IMR-90 (cell line): ENCODE measurements at regions of chr1 and their contacts with region 1.

Region 1: DNA sequence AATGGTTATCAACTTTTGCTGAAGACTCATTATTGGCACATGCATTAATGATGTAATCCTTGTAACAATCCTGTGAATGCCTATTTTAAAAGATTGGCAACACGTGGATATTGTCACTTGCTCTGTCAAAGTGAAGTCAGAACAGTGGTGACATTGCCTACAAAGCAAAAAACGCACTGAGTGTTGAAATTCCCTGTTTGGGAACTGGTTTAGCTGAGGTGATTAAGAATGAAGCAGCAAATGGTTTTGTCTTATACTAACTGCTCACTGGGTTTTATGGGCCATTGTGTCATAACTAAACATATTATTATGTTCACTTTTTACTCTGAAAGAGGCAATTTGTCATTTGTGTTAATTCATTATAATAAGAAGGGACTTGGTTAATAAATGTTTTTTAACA is 11.3 kb downstream of the OR14A16 start:
- DNase-seq: no peak
- ATAC-seq: no peak
- H3K4me3 ChIP-seq: no peak overlapping the region
- H3K27ac ChIP-seq: no peak overlapping the region
- H3K4me1 ChIP-seq: no peaks in the 10 kb centered on the region
- H3K27me3 ChIP-seq: no peaks in the 10 kb centered on the region
- CTCF ChIP-seq: no peak
- POLR2A ChIP-seq: no peak
- RAD21 ChIP-seq: no peak

Region 2: GRCh38 chr1:247241687-247242086 is 571.0 kb before region 1 on chr1:
- CTCF ChIA-PET with region 1: no interaction called
- POLR2A ChIA-PET with region 1: no interaction called
- dilution Hi-C with region 1: no loop called
- in situ Hi-C with region 1: no loop called
- intact Hi-C with region 1: loop called (anchors 5 kb)
- DNase-seq: no peak
- ATAC-seq: no peak
- H3K4me3 ChIP-seq: no peak overlapping the region
- H3K27ac ChIP-seq: no peak overlapping the region
- H3K4me1 ChIP-seq: no peaks in the 10 kb centered on the region
- H3K27me3 ChIP-seq: no peaks in the 10 kb centered on the region
- CTCF ChIP-seq: no peak
- POLR2A ChIP-seq: no peak
- RAD21 ChIP-seq: no peak

Region 3: GRCh38 chr1:248054671-248055070 is 242.0 kb after region 1 on chr1:
- CTCF ChIA-PET with region 1: no interaction called
- POLR2A ChIA-PET with region 1: no interaction called
- dilution Hi-C with region 1: no loop called
- in situ Hi-C with region 1: no loop called
- intact Hi-C with region 1: no loop called
- DNase-seq: no peak
- ATAC-seq: no peak
- H3K4me3 ChIP-seq: no peak overlapping the region
- H3K27ac ChIP-seq: no peak overlapping the region
- H3K4me1 ChIP-seq: no peaks in the 10 kb centered on the region
- H3K27me3 ChIP-seq: no peaks in the 10 kb centered on the region
- CTCF ChIP-seq: no peak
- POLR2A ChIP-seq: no peak
- RAD21 ChIP-seq: no peak